CD4-positive, alpha-beta T cell (primary cell): ENCODE measurements at regions of chr13 and their contacts with region 1.

Region 1: DNA sequence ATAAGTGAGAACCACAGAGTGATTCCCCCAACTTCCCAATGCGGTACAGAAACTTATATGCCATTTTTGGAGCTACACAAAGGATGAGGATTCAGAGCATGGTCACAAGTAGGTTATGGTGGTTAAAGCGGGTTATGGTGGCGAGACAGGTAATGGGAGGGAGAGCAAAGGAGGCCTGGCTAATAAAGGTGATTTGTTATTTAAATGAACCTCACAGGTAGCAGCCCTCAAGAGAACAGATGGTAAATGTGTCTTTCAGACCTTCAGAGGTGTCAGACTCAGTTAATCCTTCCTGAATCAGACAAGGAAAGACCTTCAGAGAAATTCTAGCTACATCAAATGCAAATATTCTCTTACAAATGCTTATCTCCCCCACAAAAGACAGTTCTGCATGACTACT is 1971.4 kb downstream of the OLFM4 start:
- DNase-seq: no peak
- ATAC-seq: no peak
- H3K4me3 ChIP-seq: no peak overlapping the region
- H3K4me3 Mint-ChIP-seq: no peak overlapping the region
- H3K27ac ChIP-seq: no peak overlapping the region
- H3K27ac Mint-ChIP-seq: no peak overlapping the region
- H3K4me1 ChIP-seq: no peaks in the 10 kb centered on the region
- H3K4me1 Mint-ChIP-seq: no peaks in the 10 kb centered on the region
- H3K27me3 ChIP-seq: no peaks in the 10 kb centered on the region
- H3K27me3 Mint-ChIP-seq: no peaks in the 10 kb centered on the region
- CTCF ChIP-seq: no peak

Region 2: DNA sequence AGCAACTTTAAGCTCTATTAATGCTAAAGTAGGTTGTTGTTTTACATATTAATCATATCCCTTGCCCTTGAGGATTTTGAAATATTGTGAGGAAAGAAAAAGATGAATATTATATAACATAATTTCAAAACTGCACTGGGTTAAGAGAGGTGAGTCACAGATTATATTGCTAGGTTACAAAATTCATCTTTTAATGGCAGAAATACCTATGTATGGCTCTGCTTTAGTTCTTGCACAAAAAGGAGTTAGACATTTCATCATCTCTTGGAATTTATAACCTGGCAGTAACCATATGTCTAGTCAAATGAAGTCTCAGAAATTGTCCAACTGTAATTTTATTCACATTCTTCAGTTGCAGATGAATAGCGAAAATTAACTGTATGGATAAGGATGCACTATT is 69.7 kb after region 1 on chr13:
- CTCF ChIA-PET with region 1: no interaction called
- POLR2A ChIA-PET with region 1: no interaction called
- intact Hi-C with region 1: loop called in 1 of 2 experiments (anchors 10 kb)
- DNase-seq: no peak
- ATAC-seq: no peak
- H3K4me3 ChIP-seq: no peak overlapping the region
- H3K4me3 Mint-ChIP-seq: no peak overlapping the region
- H3K27ac ChIP-seq: no peak overlapping the region
- H3K27ac Mint-ChIP-seq: no peak overlapping the region
- H3K4me1 ChIP-seq: no peaks in the 10 kb centered on the region
- H3K4me1 Mint-ChIP-seq: no peaks in the 10 kb centered on the region
- H3K27me3 ChIP-seq: no peaks in the 10 kb centered on the region
- H3K27me3 Mint-ChIP-seq: no peaks in the 10 kb centered on the region
- CTCF ChIP-seq: no peak